ENCODE measurements at regions of chr5 and their contacts with region 1.

Region 1: GRCh38 chr5:35785601-35786085 is 71.0 kb upstream of the IL7R start:
- DNase-seq: peak; percentile 40
- ATAC-seq: peak; percentile 81
- H3K4me3 Mint-ChIP-seq: peak overlapping the region; percentile 16
- H3K27ac Mint-ChIP-seq: peak overlapping the region; percentile 68
- H3K4me1 Mint-ChIP-seq: peaks cover 73% of the 10 kb centered on the region
- H3K27me3 Mint-ChIP-seq: no peaks in the 10 kb centered on the region

Region 2: GRCh38 chr5:35246900-35247647 is 538.6 kb before region 1 on chr5:
- CTCF ChIA-PET with region 1: no interaction called
- POLR2A ChIA-PET with region 1: no interaction called
- DNase-seq: no peak
- ATAC-seq: no peak
- H3K4me3 Mint-ChIP-seq: no peak overlapping the region
- H3K27ac Mint-ChIP-seq: no peak overlapping the region
- H3K4me1 Mint-ChIP-seq: no peaks in the 10 kb centered on the region
- H3K27me3 Mint-ChIP-seq: no peaks in the 10 kb centered on the region

Region 3: GRCh38 chr5:35707659-35708058 is 78.0 kb before region 1 on chr5:
- CTCF ChIA-PET with region 1: no interaction called
- POLR2A ChIA-PET with region 1: no interaction called
- DNase-seq: no peak
- ATAC-seq: no peak
- H3K4me3 Mint-ChIP-seq: no peak overlapping the region
- H3K27ac Mint-ChIP-seq: no peak overlapping the region
- H3K4me1 Mint-ChIP-seq: no peaks in the 10 kb centered on the region
- H3K27me3 Mint-ChIP-seq: no peaks in the 10 kb centered on the region

Region 4: GRCh38 chr5:35762368-35762767 is 23.3 kb before region 1 on chr5:
- CTCF ChIA-PET with region 1: no interaction called
- POLR2A ChIA-PET with region 1: no interaction called
- DNase-seq: no peak
- ATAC-seq: no peak
- H3K4me3 Mint-ChIP-seq: no peak overlapping the region
- H3K27ac Mint-ChIP-seq: no peak overlapping the region
- H3K4me1 Mint-ChIP-seq: peaks cover 7% of the 10 kb centered on the region
- H3K27me3 Mint-ChIP-seq: no peaks in the 10 kb centered on the region

Region 5: GRCh38 chr5:35803191-35803651 is 17.6 kb after region 1 on chr5:
- CTCF ChIA-PET with region 1: interaction called, 10 read pairs
- POLR2A ChIA-PET with region 1: no interaction called
- DNase-seq: no peak
- ATAC-seq: peak; percentile 60
- H3K4me3 Mint-ChIP-seq: no peak overlapping the region
- H3K27ac Mint-ChIP-seq: peak overlapping the region; percentile 17
- H3K4me1 Mint-ChIP-seq: peaks cover 39% of the 10 kb centered on the region
- H3K27me3 Mint-ChIP-seq: no peaks in the 10 kb centered on the region

Region 6: DNA sequence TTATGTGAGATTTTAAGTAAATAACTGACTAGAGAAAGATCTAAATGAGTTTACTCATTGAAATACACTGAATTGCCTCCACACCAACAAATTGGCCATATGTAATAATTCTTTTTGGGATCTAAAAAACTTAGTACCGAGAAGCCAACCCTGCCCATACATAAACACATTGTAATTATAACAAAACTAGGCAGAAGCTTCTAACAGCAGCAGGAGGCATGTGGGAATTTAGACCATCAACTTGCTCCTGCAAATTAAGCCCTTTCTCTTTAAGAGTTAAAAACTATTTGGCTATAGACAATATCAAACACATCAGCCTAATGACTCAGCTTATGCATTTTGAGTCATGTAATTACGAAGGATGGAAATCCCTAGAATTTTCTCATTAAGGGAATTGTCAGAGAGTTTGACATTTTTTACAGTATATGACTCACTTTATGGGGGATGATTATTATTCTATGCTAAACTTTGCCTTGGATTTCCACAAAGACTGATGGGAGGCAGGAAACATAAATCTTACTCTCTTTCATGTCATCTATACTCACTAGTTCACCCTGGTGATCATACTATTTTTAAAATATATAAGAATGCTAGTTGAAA is 72.1 kb after region 1 on chr5:
- CTCF ChIA-PET with region 1: interaction called, 62 read pairs
- POLR2A ChIA-PET with region 1: interaction called, 14 read pairs
- DNase-seq: no peak
- ATAC-seq: no peak
- H3K4me3 Mint-ChIP-seq: peak overlapping the region; percentile 85
- H3K27ac Mint-ChIP-seq: peak overlapping the region; percentile 83
- H3K4me1 Mint-ChIP-seq: peaks cover 86% of the 10 kb centered on the region
- H3K27me3 Mint-ChIP-seq: no peaks in the 10 kb centered on the region